ENCODE measurements at regions of chr3 and their contacts with region 1.

Region 1: GRCh38 chr3:67790043-67790442 is 135.6 kb upstream of the SUCLG2 start:
- DNase-seq: peak; percentile 31 to 79 (median 60)
- ATAC-seq: peak; percentile 73
- H3K4me3 ChIP-seq: no peak overlapping the region
- H3K4me3 Mint-ChIP-seq: no peak overlapping the region
- H3K27ac ChIP-seq: no peak overlapping the region
- H3K27ac Mint-ChIP-seq: no peak overlapping the region
- H3K4me1 ChIP-seq: peaks cover 5% of the 10 kb centered on the region
- H3K4me1 Mint-ChIP-seq: peaks cover 16% of the 10 kb centered on the region
- H3K27me3 ChIP-seq: no peaks in the 10 kb centered on the region
- H3K27me3 Mint-ChIP-seq: no peaks in the 10 kb centered on the region
- CTCF ChIP-seq: peak; percentile 84

Region 2: GRCh38 chr3:67384760-67385397 is 405.2 kb before region 1 on chr3:
- CTCF ChIA-PET with region 1: interaction called, 8 read pairs
- POLR2A ChIA-PET with region 1: no interaction called
- intact Hi-C with region 1: loop called (anchors 1 to 2 kb)
- DNase-seq: peak in 12 of 14 experiments; percentile 11 to 57 (median 34)
- ATAC-seq: no peak
- H3K4me3 ChIP-seq: no peak overlapping the region
- H3K4me3 Mint-ChIP-seq: no peak overlapping the region
- H3K27ac ChIP-seq: no peak overlapping the region
- H3K27ac Mint-ChIP-seq: peak overlapping the region; percentile 6
- H3K4me1 ChIP-seq: no peaks in the 10 kb centered on the region
- H3K4me1 Mint-ChIP-seq: no peaks in the 10 kb centered on the region
- H3K27me3 ChIP-seq: no peaks in the 10 kb centered on the region
- H3K27me3 Mint-ChIP-seq: no peaks in the 10 kb centered on the region
- CTCF ChIP-seq: peak; percentile 37

Region 3: GRCh38 chr3:67489816-67490215 is 300.2 kb before region 1 on chr3:
- CTCF ChIA-PET with region 1: no interaction called
- POLR2A ChIA-PET with region 1: no interaction called
- intact Hi-C with region 1: loop called in 1 of 2 experiments (anchors 10 kb)
- DNase-seq: no peak
- ATAC-seq: no peak
- H3K4me3 ChIP-seq: no peak overlapping the region
- H3K4me3 Mint-ChIP-seq: no peak overlapping the region
- H3K27ac ChIP-seq: no peak overlapping the region
- H3K27ac Mint-ChIP-seq: no peak overlapping the region
- H3K4me1 ChIP-seq: no peaks in the 10 kb centered on the region
- H3K4me1 Mint-ChIP-seq: peaks cover 11% of the 10 kb centered on the region
- H3K27me3 ChIP-seq: no peaks in the 10 kb centered on the region
- H3K27me3 Mint-ChIP-seq: no peaks in the 10 kb centered on the region
- CTCF ChIP-seq: no peak

Region 4: DNA sequence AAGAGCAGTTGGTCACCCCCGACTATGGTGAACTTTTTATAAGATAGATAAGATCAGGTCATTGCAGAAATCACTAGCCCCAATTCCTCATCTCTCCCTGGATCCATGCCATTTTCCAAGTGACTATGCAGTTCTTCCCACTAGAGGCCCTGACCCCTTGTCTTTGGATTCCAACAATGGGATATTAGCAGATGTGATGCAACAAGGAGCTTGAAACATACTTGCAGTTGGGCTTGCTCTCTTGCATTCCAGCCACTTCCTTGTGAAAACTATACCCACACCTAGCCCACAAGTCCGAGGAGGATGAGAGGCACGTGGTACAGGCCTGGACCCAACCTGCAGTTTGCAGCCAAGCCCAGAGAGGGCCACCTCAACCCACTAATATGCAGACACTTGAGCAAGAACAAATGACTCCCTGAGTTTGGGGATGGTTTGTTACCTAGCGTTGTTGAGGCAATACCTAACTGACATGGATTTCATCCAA is 196.2 kb before region 1 on chr3:
- CTCF ChIA-PET with region 1: no interaction called
- POLR2A ChIA-PET with region 1: no interaction called
- intact Hi-C with region 1: loop called in 1 of 2 experiments (anchors 10 kb)
- DNase-seq: peak in 3 of 14 experiments; percentile 13 to 21 (median 17)
- ATAC-seq: no peak
- H3K4me3 ChIP-seq: no peak overlapping the region
- H3K4me3 Mint-ChIP-seq: no peak overlapping the region
- H3K27ac ChIP-seq: no peak overlapping the region
- H3K27ac Mint-ChIP-seq: no peak overlapping the region
- H3K4me1 ChIP-seq: peaks cover 8% of the 10 kb centered on the region
- H3K4me1 Mint-ChIP-seq: peaks cover 73% of the 10 kb centered on the region
- H3K27me3 ChIP-seq: no peaks in the 10 kb centered on the region
- H3K27me3 Mint-ChIP-seq: no peaks in the 10 kb centered on the region
- CTCF ChIP-seq: no peak